ENCODE measurements at regions of chr6 and their contacts with region 1.

Region 1: GRCh38 chr6:158660333-158660754 is 10.5 kb downstream of the SYTL3 start:
- DNase-seq: peak; percentile 54
- H3K4me3 Mint-ChIP-seq: no peak overlapping the region
- H3K27ac Mint-ChIP-seq: no peak overlapping the region
- H3K4me1 Mint-ChIP-seq: peaks cover 46% of the 10 kb centered on the region
- H3K27me3 Mint-ChIP-seq: no peaks in the 10 kb centered on the region

Region 2: DNA sequence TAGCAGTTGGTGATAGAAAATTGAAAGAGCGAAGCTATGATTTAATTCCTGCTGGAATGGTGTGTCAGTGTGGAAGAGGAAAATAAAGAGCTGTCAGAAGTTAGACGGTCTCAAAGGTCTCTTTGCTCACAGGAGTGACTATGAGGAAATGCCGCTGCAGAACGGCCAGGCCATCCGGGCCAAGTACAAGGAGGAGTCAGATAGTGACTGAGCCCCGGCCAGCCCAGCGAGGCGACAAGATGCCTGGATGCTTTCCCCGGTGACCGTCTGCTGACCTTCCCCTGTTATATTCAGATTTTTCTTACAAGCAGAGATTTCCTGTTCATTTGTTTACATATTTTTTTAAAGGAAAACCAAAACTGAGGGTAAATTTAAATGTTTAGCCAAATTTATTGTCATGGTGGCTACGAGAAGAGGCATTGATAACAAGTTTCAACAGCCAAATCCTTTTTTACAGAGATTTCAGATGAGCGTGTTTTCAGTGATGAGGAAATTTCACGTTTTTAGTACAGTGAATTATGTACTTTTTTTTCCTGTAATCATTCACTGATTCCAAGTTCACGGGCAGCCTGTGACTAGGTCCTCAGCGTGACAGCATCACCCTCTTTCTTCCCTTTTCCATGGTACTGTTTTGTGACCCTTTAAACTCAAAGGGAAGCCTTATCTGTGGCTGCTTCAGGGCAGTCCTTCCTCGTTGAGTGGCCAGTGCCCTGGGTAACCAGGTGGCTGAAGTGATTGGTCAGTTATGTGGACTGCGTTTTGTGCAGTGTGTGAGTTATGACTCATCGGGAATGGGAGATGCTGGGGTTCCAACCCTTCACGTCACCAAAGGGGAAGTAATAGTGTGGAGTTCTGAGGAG is 28.4 kb before region 1 on chr6:
- CTCF ChIA-PET with region 1: interaction called, 11 read pairs
- POLR2A ChIA-PET with region 1: interaction called, 192 read pairs
- DNase-seq: peak; percentile 11
- H3K4me3 Mint-ChIP-seq: no peak overlapping the region
- H3K27ac Mint-ChIP-seq: peak overlapping the region; percentile 58
- H3K4me1 Mint-ChIP-seq: peaks cover 57% of the 10 kb centered on the region
- H3K27me3 Mint-ChIP-seq: no peaks in the 10 kb centered on the region

Region 3: DNA sequence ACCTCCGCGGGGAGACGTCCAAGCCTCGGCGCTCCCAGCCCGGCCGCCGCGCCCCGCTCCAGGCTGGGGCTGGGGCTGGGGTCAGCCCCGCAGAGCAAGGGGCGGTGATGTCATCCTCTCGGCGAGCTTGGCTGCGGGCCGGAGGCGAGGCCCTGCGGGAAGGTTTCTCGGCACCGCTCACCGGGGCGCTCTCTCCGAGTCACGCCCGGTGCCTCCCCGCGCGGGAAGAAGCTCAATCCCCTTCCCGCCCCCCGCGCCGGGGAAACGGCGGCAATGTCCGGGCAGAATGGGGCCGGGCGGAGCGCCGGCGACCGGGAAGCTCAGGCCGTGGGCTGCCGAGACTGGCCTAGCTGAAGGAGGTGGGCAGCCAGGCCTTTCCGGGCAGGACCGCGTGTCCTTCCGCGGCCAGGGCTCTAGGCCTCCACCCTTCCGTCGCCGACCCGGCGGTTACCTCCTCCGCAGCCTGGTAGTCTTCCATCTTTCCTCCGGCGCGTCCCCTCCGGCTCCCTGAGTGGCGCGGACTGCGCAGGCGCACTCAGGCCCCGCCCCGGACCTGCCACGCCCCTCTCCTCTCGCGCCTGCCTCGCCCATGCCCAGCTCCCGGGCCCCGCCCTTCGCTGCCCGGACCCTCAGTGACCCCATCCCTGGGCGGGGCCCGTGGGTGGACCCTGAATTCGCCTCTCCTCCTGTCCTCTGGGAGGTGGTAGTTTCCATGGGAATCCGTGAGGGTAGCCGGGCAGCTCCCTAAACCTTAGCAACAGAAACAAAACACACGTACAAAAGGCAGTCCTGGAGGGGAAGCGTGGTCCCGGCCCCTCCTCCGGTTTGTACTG is 15.9 kb before region 1 on chr6 and contains the start of gene DYNLT1:
- CTCF ChIA-PET with region 1: interaction called, 51 read pairs
- POLR2A ChIA-PET with region 1: interaction called, 192 read pairs
- DNase-seq: peak; percentile 92
- H3K4me3 Mint-ChIP-seq: peak within 1 kb of the TSS; percentile 100
- H3K27ac Mint-ChIP-seq: peak within 1 kb of the TSS; percentile 97
- H3K4me1 Mint-ChIP-seq: peaks cover 75% of the 10 kb centered on the region
- H3K27me3 Mint-ChIP-seq: no peaks in the 10 kb centered on the region
- total RNA-seq, gene DYNLT1: 130 to 133 TPM

Region 4: GRCh38 chr6:158649289-158650143 is 10.8 kb before region 1 on chr6 and contains the start of gene SYTL3:
- CTCF ChIA-PET with region 1: interaction called, 51 read pairs
- POLR2A ChIA-PET with region 1: interaction called, 192 read pairs
- DNase-seq: peak; percentile 82
- H3K4me3 Mint-ChIP-seq: peak within 1 kb of the TSS; percentile 73
- H3K27ac Mint-ChIP-seq: peak within 1 kb of the TSS; percentile 90
- H3K4me1 Mint-ChIP-seq: peaks cover 76% of the 10 kb centered on the region
- H3K27me3 Mint-ChIP-seq: no peaks in the 10 kb centered on the region
- total RNA-seq, gene SYTL3: 133 to 135 TPM

Region 5: DNA sequence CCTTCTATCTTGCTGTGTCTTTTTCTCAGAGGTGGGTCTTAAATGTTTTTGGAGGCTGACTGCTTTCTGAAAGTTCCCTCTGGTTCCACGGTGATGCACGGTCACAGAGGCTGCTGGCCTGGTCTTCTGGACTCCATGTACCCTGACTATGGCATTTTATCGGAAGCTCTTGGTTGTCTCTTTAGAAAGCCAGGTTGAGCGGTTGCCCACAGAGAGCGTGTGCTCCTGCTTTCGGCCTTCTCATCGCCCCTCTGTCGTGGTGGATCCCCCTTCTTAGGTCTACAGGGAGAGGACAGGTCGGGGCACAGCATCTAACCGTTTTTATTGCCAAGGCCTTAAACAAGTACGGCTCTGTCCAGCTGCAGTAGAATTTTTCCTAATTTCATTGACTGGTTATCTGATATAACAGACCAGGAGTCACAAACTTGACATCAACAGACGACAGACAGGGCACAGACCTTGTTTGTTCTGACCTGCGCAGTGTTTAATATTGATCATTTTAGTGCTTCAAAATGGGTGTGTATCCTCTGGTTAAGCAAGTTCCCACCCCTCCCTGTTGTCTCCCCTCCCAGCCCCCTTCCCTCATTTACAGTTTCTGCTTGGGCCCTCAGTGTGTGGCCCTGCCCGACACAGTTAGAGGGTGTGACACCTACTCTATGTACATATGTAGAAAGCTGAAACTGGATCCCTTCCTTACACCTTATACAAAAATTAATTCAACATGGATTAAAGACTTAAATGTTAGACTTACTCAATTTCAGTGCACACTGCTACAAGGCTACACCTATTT is 14.2 kb after region 1 on chr6:
- CTCF ChIA-PET with region 1: interaction called, 12 read pairs
- POLR2A ChIA-PET with region 1: no interaction called
- DNase-seq: no peak
- H3K4me3 Mint-ChIP-seq: no peak overlapping the region
- H3K27ac Mint-ChIP-seq: no peak overlapping the region
- H3K4me1 Mint-ChIP-seq: peaks cover 15% of the 10 kb centered on the region
- H3K27me3 Mint-ChIP-seq: no peaks in the 10 kb centered on the region